Common myeloid progenitor, CD34-positive (primary cell): ENCODE measurements at regions of chr2 and their contacts with region 1.

Region 1: GRCh38 chr2:30862054-30862651 is 54.9 kb upstream of the CAPN13 start:
- DNase-seq: peak; percentile 82 to 91 (median 87)
- H3K4me3 ChIP-seq: no peak overlapping the region
- H3K27ac ChIP-seq: no peak overlapping the region
- H3K4me1 ChIP-seq: peaks cover 6 to 20% (median 14%) of the 10 kb centered on the region in 4 experiments
- H3K27me3 ChIP-seq: peaks cover 0 to 6% (median 0%) of the 10 kb centered on the region in 5 experiments

Region 2: DNA sequence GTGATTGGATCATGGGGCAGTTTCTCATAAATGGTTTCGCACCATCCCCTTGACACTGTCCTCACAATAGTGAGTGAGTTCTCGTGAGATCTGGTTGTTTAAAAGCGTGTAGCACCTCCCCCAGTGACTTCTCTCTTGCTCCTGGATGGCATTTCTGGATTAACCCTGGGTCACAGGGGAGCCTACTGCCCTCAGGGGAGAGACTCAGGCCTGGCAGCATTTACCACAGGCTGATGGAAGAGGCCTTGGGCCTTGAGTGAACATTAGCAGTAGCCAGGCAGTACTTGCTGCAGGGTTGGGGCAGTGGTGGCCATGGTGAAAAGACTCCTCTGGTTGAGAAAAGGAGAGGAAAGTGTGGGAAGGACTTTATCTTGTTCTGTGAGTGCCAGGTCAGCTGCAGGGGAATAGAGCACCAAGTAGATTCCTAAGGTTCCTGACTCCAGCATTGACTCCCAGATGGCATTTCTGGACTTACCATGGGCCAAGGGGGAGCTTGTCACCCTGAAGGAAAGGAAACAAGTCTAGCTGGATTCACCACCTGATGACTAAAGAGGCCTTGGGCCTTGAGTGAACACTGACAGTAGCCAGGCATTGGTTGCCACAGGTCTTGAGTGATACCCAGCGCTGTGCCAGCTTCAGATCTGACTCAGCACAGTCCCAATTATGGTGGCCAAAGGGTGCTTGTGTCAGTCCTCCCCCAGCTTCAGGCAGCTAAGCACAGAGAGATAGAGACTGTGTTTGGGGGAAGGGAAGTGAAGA is 15.0 kb before region 1 on chr2:
- CTCF ChIA-PET with region 1: interaction called, 11 read pairs
- POLR2A ChIA-PET with region 1: no interaction called
- DNase-seq: no peak
- H3K4me3 ChIP-seq: no peak overlapping the region
- H3K27ac ChIP-seq: no peak overlapping the region
- H3K4me1 ChIP-seq: no peaks in the 10 kb centered on the region
- H3K27me3 ChIP-seq: no peaks in the 10 kb centered on the region

Region 3: GRCh38 chr2:31333527-31334183 is 471.5 kb after region 1 on chr2:
- CTCF ChIA-PET with region 1: interaction called, 105 read pairs
- POLR2A ChIA-PET with region 1: no interaction called
- DNase-seq: peak; percentile 69 to 88 (median 83)
- H3K4me3 ChIP-seq: no peak overlapping the region
- H3K27ac ChIP-seq: no peak overlapping the region
- H3K4me1 ChIP-seq: no peaks in the 10 kb centered on the region
- H3K27me3 ChIP-seq: no peaks in the 10 kb centered on the region